ENCODE measurements at regions of chr10 and their contacts with region 1.

Region 1: DNA sequence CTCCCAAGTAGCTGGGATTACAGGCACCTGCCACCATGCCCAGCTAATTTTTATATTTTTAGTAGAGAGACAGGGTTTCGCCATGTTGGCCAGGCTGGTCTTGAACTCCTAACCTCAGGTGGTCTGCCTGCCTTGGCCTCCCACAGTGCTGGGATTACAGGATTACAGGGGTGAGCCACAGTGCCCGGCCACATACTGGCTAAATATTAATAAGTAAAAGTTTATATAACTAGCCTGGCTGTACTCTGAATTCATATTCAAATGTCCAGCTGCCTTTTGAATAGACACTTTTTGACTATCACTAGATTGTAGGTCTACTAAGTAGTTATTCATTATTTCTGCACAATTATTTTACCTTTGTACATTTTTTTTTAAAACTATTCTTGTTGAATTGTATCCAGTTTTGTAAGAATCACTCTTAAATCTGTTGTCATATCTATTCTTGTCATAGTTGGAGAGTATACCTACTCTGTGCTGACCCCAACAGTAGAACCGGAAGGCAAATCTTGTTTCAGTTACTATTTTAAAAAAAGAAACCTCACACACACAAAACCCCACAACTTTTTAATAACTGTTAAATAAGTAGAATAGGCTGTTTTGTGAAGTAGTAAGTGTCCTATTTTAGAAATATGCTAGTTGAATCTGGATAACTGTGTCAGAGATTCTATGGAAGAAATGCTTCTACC is 29.6 kb downstream of the MINPP1 start:
- DNase-seq: no peak
- H3K27ac ChIP-seq: no peak overlapping the region
- CTCF ChIP-seq: no peak

Region 2: GRCh38 chr10:86775056-86775869 is 759.1 kb before region 1 on chr10:
- CTCF ChIA-PET with region 1: no interaction called
- POLR2A ChIA-PET with region 1: no interaction called
- DNase-seq: no peak
- H3K27ac ChIP-seq: no peak overlapping the region
- CTCF ChIP-seq: no peak

Region 3: DNA sequence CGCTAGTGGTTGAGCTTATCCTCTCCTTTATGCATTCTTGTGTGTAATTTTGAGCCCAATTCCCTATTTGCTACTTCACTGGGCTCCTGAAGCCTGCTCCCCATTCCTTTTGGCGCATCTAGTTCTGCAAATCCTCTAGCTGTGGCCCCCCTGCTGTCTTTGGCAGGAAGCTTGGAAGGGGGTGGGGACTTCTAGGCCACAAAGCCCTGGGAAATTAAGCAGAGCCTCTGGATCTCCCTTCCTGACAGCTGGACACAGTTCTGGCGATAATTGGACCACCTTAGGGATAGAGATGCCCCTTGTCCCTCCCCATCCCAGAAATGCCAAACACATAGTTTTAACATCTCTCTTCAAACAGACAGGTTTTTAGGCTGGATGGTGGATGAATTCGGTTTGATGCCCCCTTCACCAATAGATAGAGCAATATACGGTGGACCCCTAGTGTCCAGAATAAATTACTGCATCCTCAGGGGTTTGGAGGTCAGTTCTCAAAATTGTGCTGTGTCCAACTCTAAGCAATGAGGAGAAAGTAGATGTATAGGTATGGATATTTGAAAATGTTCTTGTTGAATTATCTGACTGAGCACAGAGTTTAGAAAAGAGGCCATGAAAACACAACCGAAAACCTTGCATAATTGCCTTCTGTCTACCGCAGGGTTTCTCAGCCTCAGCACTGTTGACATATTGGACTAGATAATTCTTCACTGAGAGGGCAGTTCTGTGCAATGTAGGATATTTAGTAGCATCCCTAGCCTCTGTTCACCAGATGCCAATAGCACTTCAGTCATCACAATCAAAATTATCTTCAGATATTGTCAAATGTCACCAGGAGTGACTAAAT is 200.9 kb after region 1 on chr10:
- CTCF ChIA-PET with region 1: interaction called, 13 read pairs
- POLR2A ChIA-PET with region 1: no interaction called
- DNase-seq: peak; percentile 61
- H3K27ac ChIP-seq: no peak overlapping the region
- CTCF ChIP-seq: peak; percentile 81

Measured in RWPE1 (cell line).